ENCODE measurements at regions of chr4 and their contacts with region 1.

Region 1: DNA sequence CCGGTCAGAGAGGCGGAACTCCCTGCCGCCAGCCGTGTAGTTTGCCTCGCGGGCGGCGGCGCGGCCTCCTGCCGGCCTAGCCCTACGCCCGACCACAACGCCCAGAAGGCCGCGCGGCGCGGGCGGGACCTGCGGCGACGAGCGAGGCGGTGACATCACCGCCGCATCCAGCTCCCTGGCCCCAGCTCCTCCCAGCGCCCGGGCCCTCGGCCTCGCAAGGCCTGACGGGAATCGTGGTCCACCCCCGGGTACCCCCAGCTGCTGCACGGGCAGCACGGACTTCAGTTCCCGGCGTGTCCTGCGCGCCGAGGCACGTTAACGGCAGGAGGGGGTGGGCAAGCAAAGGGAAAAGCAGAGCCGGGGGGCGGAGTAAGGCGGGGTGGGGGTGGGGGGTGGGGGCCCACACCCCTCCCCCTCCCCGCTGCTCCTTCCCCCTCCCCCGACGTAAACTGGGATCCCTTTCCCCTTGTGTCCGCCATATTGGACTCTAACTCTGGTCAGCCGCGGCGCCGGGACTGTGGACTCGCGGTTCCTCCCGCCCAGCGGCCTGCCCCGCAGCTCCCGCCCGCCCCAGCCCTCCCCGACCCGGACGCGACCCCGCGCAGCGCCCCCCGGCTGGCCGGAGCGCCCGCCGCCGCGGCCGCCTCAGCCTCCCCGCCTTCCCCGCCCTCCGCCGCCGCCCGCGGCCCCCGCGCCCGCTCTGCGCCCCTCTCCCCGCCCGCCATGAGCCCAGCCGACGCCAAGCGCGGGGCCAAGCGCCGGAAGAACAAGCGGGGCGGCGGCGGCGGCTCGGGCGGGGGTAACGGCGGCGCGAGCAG is at the start of gene FAM193A:
- DNase-seq: peak; percentile 100
- total RNA-seq, gene FAM193A: 19.5 TPM

Region 2: DNA sequence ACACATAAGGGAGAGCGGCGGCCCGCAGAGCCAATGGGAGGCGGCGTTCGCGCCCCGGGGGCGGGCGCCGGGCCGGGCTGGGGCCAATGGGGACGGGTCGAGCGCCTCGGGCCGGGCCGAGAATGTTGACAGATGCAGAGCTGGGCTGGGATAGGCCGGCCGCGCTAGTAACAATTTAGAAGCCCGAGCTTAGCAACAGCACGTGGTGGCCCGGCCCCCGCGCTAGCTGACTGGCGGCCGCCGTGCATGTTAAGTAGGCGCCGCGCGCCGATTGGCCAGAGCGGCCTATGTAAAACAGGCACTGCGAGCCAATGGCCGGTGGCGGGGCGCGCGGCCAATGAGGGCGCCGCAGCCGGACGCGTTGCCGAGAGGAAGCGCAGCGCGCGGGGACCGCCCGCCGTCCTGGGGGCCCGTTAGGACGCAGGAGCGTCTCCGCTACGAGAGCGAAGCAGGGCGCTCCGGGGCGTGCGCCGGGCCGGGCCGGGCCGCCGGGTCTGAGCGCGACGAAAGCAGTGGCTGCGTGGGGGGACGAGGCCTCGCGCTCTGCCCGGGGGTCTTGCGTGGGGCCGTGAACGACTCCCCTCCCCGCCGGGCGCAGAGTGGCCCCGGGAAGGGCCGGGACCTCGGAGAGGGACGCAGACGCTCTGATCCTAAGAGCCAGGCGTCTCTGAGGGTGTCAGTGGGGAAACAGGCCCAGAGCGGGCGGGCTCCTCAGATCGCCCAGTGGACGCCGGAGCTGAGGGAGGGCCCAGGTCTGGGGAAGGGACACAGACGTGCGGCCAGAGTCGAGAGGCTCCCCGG is 274.1 kb before region 1 on chr4:
- intact Hi-C with region 1: loop called (anchors 5 kb)
- DNase-seq: peak; percentile 100

Region 3: DNA sequence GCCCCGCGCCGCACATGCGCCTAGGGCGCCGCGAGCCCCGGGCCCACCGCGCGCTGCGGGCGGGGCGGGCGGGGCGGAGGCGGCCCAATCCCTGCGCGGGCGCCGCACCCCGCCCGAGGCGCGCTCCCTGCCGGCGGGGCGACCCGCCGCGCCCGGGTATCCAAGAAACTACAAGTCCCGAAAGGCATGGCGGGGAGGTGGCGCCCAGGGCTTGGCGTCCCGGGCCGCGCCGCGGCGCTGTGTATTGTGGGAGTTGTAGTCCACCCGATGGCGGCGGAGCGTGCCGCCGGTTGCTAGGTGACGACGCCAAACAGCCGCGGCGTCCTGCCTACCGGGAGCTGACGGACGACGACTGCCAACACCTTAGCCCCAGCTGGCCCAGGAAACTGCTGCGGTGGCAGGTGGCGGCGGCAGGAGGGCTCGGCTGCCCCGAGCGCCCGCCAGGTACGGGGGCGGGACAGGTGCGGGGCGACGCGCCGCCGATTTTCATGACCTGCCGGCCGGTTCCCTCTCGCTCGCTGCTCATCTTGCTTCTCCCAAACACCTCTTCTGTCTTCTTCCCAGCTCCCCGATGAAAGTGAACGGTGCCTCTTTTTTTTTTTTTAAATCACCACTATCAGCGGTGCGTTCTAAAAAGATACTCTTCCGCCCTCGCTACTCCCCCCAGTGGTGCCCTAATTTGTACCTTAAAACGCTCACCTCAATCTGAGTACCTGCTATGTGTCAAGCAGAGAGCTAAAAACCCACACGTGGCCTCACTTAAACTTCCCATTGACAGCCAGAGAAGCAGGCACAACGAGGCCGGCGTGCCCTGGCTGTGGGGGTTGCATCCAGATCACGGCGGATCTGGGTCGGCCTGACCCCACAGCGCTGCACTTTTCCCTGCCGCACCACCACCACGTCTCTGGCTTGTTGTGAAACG is 117.5 kb before region 1 on chr4 and contains the start of gene CFAP99:
- intact Hi-C with region 1: loop called (anchors 5 kb)
- DNase-seq: peak; percentile 98
- total RNA-seq, gene CFAP99: not detected

Region 4: GRCh38 chr4:2468445-2469192 is 67.8 kb before region 1 on chr4 and contains the start of gene RNF4:
- intact Hi-C with region 1: loop called (anchors 1 kb)
- DNase-seq: peak; percentile 98
- total RNA-seq, gene RNF4: 29.7 TPM

Region 5: DNA sequence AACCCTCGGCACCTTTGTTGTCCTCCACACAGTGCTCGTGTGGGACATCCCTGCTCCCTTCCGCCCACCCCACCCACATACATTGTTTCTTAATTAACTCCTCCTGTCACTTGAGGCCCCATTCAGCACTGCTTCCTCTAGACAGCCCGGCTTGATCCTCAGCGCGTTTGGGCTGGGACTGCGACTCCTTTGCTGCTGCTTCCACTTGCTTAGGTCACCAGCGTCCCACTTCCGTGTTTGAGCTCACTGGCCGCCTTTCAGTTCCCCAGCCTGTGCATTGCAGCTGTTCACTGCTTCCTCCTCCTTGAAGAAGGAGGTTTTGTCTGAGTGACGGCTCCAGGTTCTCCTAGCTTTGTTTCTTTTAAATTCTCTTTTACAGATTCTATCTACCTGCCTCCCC is 51.4 kb before region 1 on chr4:
- intact Hi-C with region 1: loop called (anchors 5 kb)
- DNase-seq: peak; percentile 94

Region 6: DNA sequence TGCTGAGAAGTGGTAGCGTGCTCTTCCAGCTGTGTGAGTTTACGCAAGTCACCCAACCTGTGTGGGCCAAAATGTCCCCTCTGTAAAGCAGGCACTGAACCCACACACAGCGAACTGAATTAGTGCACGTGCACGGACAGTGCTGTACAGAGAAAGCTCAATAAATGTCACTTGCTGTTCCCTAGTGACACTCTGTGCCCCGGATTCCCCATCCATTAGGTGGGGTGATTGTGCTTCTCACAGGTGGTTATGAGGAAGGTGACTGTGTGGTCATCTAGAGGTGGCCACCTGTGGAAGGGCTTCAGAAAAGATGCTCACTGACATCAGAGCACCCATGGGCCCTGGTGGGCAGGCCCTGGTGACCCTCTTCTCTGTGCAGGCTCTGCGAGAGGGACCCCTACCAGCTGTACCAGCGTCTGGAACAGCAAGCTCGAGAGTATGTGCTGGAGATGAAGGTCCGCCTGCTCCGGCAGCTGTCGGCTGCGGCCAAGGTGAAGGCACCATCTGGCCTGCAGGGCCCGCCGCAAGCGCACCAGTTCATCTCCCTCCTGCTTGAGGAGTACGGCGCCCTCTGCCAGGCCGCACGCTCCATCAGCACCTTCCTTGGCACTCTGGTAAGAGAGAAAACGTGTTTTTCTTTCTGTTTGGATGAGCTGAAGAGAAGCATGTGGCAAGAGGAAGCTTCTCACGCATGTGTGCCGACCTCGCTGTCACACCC is 94.3 kb after region 1 on chr4:
- intact Hi-C with region 1: no loop called
- DNase-seq: peak; percentile 66

Region 7: GRCh38 chr4:2755837-2756694 is 219.7 kb after region 1 on chr4 and contains the start of gene TNIP2:
- intact Hi-C with region 1: loop called (anchors 10 kb)
- DNase-seq: peak; percentile 95
- total RNA-seq, gene TNIP2: 22.6 TPM

Region 8: DNA sequence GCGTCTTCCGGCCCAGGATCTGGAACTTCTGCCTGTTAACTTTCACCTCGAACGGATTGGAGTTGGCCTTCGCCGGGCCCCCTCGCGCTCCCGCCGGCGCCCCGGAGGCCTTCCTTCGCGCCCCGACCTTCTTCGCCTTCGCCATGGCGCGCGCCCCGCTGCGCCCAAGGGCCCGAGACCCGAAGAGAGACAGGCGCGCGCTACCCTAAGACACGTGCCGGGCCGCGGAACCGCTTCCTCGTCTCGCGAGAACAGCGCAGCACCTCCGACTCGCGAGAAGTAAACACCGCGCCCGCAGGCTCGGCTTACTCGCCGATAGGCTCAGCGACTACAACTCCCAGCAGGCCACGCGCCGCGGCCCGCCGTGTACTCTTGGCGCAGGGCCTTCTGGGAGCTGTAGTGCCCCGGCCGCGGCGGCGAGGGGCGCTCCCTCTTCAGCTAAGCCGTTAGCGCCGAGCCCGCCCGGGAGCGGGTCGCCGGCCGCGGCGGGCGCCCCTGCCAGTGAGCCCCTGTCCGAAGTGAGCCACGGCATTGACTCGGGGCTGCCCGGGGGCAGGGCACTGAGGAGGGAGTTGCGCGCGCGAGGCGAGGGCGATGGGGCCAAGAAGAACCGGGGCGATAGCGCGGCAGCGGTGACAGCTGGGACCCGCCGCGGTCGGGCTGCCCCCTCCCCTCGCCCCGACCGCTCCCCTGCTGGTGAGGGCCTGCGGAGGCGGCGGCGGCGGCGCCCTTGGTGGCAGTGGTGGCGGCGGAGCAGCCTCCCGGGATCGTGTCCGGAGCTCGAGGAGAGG is 427.0 kb after region 1 on chr4 and contains the starts of genes GRK4 and NOP14:
- intact Hi-C with region 1: loop called (anchors 10 kb)
- DNase-seq: peak; percentile 99
- total RNA-seq, gene GRK4: 13.5 TPM
- total RNA-seq, gene NOP14: 16.1 TPM

Measured in cardiac septum (tissue), 1 donor.